Tibial artery (tissue), 4 donors: ENCODE measurements at regions of chr6 and their contacts with region 1.

Region 1: DNA sequence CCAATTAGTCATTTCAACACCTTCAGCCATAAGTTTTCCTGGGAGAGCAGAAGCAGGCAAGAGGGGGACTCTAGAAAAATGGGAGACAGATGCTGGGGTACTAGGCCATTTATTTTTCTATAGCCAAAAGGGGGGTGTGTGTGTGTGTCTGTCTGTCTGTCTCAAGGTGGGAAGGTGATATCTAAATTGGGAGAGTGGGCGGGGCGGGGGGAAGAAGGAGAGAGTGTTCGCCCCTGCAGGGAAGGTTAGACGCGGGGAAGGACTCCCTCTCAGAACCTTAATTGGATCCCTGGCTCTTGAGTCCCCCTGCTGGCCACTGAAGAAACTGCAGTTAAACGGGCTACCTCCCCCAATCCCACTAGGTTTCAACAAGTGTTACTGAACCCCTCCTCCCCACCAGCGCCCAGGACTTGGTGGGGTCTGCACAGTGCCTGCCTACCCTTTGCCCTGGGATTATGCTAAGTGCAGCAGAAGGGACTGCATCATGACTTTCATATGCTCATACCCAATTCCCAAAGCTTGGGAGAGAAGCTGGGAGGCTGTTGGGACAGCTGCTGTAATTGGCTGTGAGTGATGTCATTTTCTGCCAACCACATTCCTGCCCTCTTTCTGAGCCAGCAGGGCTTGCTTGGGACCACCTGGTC is 45.8 kb downstream of the FOXP4 start:
- DNase-seq: peak; percentile 72 to 88
- H3K4me3 ChIP-seq: no peak overlapping the region
- H3K27ac ChIP-seq: no peak overlapping the region
- H3K4me1 ChIP-seq: no peaks in the 10 kb centered on the region
- H3K27me3 ChIP-seq: no peaks in the 10 kb centered on the region
- CTCF ChIP-seq: peak; percentile 90 to 96

Region 2: DNA sequence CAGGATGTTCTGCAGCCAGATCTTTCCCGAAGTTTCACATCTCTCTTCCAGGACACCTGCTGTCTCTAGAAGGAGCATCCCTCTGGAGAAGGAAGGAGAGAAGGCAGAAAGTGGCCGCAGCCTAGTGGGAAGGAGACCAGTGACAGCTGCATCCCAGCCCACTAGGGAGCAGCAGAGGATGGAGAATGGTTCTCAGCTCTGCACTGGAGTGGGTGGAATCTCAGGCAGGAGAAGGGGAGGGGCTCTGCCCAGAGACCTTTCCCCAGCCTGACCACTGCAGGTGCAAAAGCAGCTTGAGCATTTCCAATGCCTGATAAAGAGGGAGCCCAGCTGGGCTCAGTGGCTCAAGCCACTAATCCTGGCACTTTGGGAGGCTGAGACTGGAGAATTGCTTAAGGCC is 224.3 kb before region 1 on chr6:
- intact Hi-C with region 1: loop called (anchors 5 kb)
- DNase-seq: no peak
- H3K4me3 ChIP-seq: no peak overlapping the region
- H3K27ac ChIP-seq: no peak overlapping the region
- H3K4me1 ChIP-seq: peaks cover 0 to 25% (median 19%) of the 10 kb centered on the region in 4 donors
- H3K27me3 ChIP-seq: peaks cover 3 to 77% of the 10 kb centered on the region in 2 donors
- CTCF ChIP-seq: peak; percentile 32 to 40

Region 3: GRCh38 chr6:41424370-41425058 is 167.5 kb before region 1 on chr6:
- intact Hi-C with region 1: loop called (anchors 5 kb)
- DNase-seq: peak; percentile 88 to 92
- H3K4me3 ChIP-seq: no peak overlapping the region
- H3K27ac ChIP-seq: no peak overlapping the region
- H3K4me1 ChIP-seq: peaks cover 0 to 39% (median 33%) of the 10 kb centered on the region in 4 donors
- H3K27me3 ChIP-seq: no peaks in the 10 kb centered on the region
- CTCF ChIP-seq: peak; percentile 83 to 88

Region 4: DNA sequence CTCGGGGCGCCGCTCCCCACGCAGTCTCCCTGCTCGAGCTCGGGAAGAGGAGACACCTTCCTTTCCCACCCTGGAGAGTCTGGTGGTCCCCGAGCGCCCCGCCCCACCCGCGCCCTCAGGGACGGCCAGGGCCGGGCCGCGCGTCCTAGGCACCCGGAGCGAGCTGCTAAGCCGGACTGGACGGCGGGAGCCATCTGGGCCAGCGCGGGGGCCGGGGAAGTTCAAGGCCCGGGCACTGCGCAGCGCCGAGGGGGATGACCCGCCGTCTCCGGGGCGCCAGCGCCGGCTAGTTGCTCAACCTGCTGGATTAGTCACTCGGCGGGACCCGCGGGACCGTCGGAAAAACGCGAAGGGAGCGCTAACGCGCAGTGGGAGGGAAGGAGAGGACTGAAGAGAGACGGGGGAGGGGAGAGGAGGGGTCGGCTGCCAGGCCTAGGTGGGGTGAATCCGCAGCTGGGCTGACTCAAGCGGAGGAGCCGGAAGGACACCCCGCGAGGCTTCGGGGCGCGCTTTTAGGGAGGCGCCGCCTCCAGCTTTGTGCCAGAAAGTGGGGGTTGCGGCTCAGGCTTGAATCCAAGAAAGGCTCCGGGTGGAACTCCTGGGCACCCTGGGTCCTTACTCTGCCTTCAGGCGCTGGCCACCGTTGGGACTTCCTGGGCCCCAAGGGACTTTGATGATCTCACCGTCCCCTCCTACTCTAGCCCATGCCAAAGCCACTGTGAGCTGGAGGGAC is 121.5 kb before region 1 on chr6:
- intact Hi-C with region 1: loop called (anchors 2 kb)
- DNase-seq: peak; percentile 77 to 94
- H3K4me3 ChIP-seq: peak overlapping the region; percentile 6 to 41
- H3K27ac ChIP-seq: peak overlapping the region; percentile 58 to 69
- H3K4me1 ChIP-seq: peaks cover 3 to 39% (median 20%) of the 10 kb centered on the region in 4 donors
- H3K27me3 ChIP-seq: peaks cover 0 to 2% of the 10 kb centered on the region in 2 donors
- CTCF ChIP-seq: no peak

Region 5: DNA sequence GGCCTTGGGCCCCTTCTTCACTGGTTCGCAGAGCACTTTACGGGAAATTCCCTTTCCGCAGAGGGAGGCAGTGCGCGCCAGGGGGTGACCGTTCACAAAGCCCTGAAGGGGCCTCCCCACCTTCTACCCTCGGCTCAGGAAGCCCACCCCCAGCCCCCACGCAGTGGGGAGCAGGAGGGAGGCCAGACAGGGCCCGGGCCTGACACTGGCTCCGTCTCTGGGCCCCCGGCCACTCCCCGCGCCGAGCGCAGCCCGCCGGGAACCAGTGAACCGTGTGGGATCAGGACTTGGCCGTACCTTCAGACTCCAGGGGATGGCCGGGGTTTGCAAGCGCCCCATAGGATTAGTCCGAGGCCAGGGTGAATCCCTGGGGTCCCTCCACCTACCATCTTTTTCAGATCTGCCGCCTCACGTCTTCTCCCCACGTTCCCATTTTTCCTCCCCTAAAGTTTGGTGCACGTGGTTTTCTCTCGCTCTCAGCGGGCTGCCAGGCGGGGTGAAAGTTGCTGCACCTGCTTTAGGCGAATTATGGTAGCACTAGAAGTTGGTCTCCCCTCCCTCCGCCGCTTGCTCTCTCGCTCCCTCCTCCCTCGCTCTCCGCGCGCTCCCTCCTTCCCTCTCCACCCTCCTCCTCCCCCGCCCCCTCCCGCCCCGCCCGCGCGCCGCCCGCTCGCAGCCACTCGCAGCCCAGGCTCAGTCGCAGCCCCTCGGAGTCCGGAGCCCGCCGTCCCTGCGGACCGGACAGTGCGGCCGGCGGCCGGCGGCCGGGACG is 46.1 kb before region 1 on chr6 and contains the start of gene FOXP4:
- intact Hi-C with region 1: loop called (anchors 5 kb)
- DNase-seq: peak; percentile 94 to 96
- H3K4me3 ChIP-seq: peak within 1 kb of the TSS; percentile 97 to 98
- H3K27ac ChIP-seq: peak within 1 kb of the TSS; percentile 88 to 90
- H3K4me1 ChIP-seq: peaks cover 7 to 46% (median 34%) of the 10 kb centered on the region in 4 donors
- H3K27me3 ChIP-seq: no peaks in the 10 kb centered on the region
- CTCF ChIP-seq: no peak

Region 6: DNA sequence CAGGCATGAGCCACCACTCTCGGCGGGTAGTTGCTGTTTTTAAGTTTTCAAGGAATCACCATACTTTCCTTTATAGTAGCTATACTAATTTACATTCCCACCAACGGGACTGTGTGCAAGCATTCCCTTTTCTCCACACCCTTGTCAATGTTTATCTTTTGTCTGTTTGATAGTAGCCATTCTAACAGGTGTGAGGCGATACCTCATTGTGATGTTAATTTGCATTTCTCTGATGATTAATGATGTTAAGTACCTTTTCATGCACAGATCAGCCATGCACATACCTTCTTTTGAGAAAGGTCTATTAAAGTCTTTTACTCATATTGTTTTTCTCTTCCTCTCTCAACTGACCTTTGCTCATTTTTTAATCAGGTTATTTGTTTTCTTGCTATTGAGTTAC is 392.6 kb after region 1 on chr6:
- intact Hi-C with region 1: no loop called
- DNase-seq: no peak
- H3K4me3 ChIP-seq: no peak overlapping the region
- H3K27ac ChIP-seq: no peak overlapping the region
- H3K4me1 ChIP-seq: no peaks in the 10 kb centered on the region
- H3K27me3 ChIP-seq: no peaks in the 10 kb centered on the region
- CTCF ChIP-seq: no peak